ENCODE measurements at regions of chr9 and their contacts with region 1.

Region 1: DNA sequence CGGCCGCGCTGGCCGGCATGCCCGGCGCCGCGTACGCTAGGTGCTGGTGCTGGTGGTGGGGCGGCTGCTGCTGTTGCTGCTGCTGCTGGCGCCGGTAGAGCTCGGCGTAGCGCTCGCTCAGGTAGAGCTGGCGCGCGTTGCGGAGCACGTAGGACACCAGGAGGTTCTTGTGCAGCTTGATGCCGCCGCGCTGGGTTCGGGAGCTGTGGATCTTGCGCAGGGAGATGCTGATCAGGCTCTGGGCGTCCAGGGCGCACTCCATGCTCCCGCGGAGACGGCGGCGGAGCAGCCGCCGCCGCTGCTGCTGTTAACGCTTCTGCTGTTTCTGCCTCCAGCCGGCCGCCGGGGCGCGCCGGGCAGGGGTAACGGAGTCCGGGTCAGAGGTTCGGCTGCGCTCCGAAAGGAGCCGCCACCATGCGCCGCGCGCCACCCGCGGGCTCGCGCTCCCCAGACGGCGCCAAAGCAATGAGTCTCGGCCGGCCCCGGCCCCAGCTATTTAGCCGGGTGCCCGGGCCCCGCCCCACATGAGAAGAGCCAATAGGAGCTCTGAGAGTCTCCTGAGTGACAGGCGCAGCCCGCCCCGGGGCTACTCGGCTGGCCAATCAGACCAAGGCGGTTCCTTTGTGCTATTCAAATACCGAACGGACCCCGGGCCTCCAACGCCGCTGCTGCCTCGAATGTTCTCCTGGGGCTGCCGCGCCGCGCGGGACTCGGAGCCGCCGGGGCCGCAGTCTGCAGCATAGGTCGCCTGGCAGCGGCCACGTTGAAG is at the start of gene IER5L:
- DNase-seq: peak; percentile 99
- total RNA-seq, gene IER5L: 23.5 to 35.0 TPM

Region 2: DNA sequence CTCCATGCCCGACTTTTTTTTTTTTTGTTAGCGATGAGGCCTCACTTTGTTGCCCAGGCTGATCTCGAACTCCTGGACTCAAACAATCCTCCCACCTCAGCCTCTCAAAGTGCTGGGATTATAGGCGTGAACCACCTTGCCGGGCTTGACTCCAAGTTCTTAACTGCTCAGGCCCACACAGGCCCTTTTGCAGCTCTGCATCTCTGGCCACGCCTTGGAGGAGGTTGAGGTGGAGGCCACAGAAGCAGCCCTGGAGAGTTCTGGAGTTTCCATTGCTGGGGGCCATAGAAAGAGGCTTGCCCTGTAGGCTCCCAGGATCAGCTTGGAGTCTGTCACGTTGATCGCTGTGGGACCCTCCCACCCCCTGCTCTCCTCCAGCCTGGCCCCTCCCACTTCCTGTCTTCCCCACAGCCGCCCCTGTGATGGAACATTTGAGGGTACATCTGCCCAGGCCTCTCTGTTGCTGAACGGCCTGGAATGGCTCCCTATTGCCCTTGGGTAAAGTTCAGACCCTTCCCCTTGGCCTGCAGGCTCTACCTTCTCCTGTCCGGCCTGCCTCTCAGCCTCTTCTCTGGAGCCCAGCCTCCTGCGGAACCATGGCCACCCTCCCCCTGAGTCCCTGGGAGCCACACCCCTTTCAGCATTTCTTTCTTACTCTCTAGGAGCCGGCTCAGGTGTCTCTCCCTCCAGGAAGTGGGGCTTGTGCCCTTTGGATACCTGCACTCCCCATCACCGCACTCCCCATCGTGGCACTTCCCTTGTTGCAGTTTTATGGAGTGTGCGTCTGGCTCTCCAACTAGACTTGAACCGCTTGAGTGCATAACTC is 30.4 kb after region 1 on chr9:
- intact Hi-C with region 1: no loop called
- DNase-seq: no peak

Region 3: GRCh38 chr9:129333953-129334724 is 156.2 kb after region 1 on chr9:
- intact Hi-C with region 1: loop called in 1 of 2 experiments (anchors 5 kb)
- DNase-seq: peak; percentile 98

Region 4: GRCh38 chr9:129489838-129490582 is 312.0 kb after region 1 on chr9:
- intact Hi-C with region 1: loop called (anchors 5 to 10 kb)
- DNase-seq: no peak

Region 5: GRCh38 chr9:129495534-129496325 is 317.8 kb after region 1 on chr9:
- intact Hi-C with region 1: loop called (anchors 5 to 10 kb)
- DNase-seq: peak; percentile 98

Measured in posterior vena cava (tissue), 2 donors.